ENCODE measurements at regions of chr22 and their contacts with region 1.

Region 1: GRCh38 chr22:43385770-43386641 is 25.8 kb upstream of the MPPED1 start:
- DNase-seq: no peak
- H3K4me3 ChIP-seq: no peak overlapping the region
- H3K27me3 ChIP-seq: peaks cover 9% of the 10 kb centered on the region
- CTCF ChIP-seq: peak; percentile 96

Region 2: DNA sequence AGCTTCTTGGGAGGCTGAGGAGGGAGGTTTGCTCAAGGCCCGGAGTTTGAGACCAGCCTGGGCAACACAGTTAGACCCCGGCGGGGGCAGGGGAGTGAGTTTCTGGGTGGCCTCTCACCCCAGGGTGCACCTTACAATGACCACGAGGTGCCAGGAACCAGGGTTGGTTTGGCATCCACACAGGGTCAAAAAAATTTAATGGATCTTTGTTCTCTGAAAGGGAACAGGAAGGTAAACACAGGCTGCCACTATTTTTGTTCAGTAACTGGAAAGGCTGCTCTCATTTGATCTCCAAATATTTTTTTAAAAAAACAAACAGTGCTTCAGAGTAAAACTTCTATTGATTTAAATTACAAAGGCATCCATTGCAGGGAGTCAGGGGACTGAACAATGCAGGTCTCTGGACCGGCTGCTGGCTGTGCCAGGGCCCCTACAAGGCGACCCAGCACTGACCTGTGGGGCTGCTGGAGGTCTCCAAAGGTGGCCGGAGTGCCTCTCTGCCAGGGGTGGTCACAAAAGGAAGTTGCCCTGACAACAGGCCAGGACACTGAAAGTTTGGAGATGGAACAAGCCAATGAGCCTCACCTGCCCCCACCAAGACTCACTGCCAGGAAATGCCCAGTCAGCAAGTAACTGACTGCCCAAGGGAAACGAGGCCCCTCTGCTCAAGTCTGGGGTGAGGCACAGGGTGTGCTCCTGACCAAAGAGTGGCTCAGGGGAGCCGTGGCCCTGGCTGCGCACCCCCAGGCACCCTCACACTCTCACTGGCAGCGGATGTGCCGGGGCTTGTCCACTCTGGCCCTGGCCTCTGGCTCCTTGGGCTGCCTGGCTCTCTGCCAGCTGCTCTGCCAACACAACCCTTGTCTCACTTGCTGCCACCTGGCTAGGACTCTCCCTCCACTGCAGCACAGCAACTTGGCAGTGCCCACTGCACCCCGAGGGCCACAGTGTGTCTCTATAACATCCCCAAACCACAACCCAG is 580.7 kb before region 1 on chr22:
- CTCF ChIA-PET with region 1: no interaction called
- POLR2A ChIA-PET with region 1: no interaction called
- DNase-seq: no peak
- H3K4me3 ChIP-seq: no peak overlapping the region
- H3K27me3 ChIP-seq: no peaks in the 10 kb centered on the region
- CTCF ChIP-seq: no peak

Region 3: GRCh38 chr22:42868751-42869251 is 517.2 kb before region 1 on chr22:
- CTCF ChIA-PET with region 1: no interaction called
- POLR2A ChIA-PET with region 1: no interaction called
- DNase-seq: no peak
- H3K4me3 ChIP-seq: no peak overlapping the region
- H3K27me3 ChIP-seq: no peaks in the 10 kb centered on the region
- CTCF ChIP-seq: no peak

Region 4: DNA sequence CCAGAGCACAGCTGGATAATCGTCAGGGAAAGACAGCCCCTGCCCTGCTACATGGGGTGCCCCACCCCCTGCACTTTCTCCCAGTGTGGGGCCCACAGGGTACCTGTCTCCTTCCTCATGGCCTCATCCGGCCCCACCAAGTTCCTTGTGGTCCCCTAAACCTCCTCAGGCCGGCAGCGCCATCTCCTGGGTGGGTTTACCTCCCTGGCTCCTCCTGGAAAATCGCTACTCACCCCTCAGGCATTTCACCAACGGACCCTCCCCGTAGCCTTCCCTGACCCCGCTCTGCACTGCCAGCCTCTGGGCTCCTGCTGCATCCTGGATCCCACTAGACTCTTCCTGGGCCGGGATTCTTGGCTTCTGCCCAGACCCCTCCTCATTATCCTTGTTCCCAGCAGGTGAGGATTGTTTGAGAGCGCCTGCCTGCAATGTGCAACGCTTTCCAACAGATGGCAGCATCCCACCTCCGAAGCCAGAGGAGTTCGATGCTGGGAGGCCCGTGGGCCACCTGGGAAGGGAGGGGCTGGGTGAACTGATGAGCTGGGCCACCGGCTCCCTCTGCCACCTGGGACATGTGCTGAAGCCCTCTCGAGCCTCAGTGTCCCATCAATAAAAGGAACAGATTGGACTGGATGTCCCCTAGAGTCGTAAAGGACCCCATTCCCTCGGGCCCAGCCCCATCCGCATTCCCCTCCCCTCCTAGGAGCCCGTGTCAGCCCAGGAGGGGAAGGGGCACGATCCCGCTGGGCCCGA is 154.9 kb before region 1 on chr22:
- CTCF ChIA-PET with region 1: interaction called, 13 read pairs
- POLR2A ChIA-PET with region 1: no interaction called
- DNase-seq: no peak
- H3K4me3 ChIP-seq: no peak overlapping the region
- H3K27me3 ChIP-seq: peaks cover 6% of the 10 kb centered on the region
- CTCF ChIP-seq: peak; percentile 85

Region 5: GRCh38 chr22:43407591-43407990 is 21.6 kb after region 1 on chr22:
- CTCF ChIA-PET with region 1: interaction called, 15 read pairs
- POLR2A ChIA-PET with region 1: no interaction called
- DNase-seq: no peak
- H3K4me3 ChIP-seq: no peak overlapping the region
- H3K27me3 ChIP-seq: peaks cover 17% of the 10 kb centered on the region
- CTCF ChIP-seq: no peak

Region 6: GRCh38 chr22:43796567-43796966 is 410.6 kb after region 1 on chr22:
- CTCF ChIA-PET with region 1: interaction called, 34 read pairs
- POLR2A ChIA-PET with region 1: no interaction called
- DNase-seq: no peak
- H3K4me3 ChIP-seq: no peak overlapping the region
- H3K27me3 ChIP-seq: no peaks in the 10 kb centered on the region
- CTCF ChIP-seq: peak; percentile 58

Region 7: DNA sequence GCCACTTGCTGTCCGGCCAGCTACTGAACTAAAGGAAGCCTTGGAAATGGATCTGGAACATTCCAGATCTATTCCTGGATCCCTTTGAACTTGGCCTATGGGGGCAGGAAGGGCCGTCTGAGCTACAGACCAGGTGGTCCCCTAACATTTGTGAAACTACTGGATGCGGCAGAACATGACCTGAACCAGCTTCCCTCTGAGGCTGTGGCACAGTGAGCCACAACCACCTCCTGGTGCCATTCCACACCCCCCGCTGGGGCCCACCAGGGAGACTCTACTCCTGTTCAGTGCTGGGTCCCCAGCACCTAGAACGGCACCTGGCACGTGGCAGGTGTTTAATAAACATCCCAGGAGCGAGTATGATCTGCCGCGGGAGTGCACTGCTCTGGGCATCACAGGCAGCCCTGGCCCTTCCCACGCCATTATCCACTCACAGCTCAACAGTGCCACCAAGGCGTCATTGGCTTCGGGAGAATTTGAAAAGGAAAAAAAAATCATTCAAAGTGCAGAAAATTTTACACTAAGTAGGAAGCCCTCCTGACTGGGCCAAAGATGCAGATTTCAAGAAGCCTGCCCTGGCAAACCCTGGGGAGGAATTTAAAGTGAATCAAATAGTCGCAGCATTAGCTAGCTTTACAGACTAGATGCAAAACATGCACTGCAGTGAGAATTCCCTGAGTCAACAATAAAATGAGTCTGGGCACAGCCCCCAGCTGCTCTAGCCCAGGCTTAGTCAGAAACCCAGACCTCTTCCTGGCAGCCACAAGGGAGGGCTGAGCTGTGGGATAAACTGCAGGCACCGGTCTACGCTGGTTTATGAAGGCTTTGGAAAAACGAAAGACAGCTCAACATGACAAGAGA is 440.4 kb after region 1 on chr22:
- CTCF ChIA-PET with region 1: interaction called, 48 read pairs
- POLR2A ChIA-PET with region 1: no interaction called
- DNase-seq: no peak
- H3K4me3 ChIP-seq: no peak overlapping the region
- H3K27me3 ChIP-seq: no peaks in the 10 kb centered on the region; the same call in 1 of the 2 replicates
- CTCF ChIP-seq: peak; percentile 48